ENCODE measurements at regions of chr3 and their contacts with region 1.

Region 1: GRCh38 chr3:49454458-49454857 is 15.6 kb upstream of the DAG1 start:
- DNase-seq: no peak
- H3K4me3 Mint-ChIP-seq: no peak overlapping the region
- H3K27ac Mint-ChIP-seq: no peak overlapping the region
- H3K4me1 Mint-ChIP-seq: no peaks in the 10 kb centered on the region
- H3K27me3 Mint-ChIP-seq: no peaks in the 10 kb centered on the region

Region 2: DNA sequence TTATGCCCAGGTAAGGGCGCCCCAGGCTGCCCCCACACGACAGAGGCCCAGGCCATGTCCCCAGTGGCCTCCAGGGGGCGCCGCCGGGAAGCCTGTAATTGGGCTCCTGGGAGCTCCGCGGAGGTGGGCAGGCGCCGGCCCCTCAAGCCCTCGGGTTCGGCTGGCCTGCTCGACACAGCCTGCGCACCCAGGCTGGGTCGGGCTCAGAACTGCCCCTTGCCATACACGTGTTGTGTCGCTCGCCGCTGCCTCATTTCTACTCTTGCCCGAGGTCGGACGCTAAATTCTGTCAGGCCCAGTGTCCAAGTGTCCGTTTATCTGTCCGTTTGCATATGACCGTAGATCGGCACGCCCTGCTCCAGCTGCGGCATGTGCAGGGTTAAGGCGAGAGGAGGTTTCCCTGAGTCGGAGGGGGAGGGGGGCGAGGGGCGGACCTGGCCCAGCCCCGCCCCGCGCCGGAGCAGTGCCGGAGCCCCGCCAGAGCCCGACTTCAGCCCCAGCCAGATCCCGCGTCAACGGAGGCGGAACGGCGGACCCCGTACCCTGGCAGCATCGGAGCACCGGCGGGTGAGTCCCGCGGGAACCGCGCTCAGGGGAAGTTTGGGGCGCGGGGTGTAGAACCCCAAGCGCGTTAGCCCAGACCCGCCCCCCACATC is 283.2 kb before region 1 on chr3 and contains the start of gene KLHDC8B:
- intact Hi-C with region 1: loop called (anchors 1 kb)
- DNase-seq: peak; percentile 73
- H3K4me3 Mint-ChIP-seq: peak within 1 kb of the TSS; percentile 84
- H3K27ac Mint-ChIP-seq: peak within 1 kb of the TSS; percentile 48
- H3K4me1 Mint-ChIP-seq: peaks cover 8% of the 10 kb centered on the region
- H3K27me3 Mint-ChIP-seq: no peaks in the 10 kb centered on the region
- total RNA-seq, gene KLHDC8B: 2.5 and 2.6 TPM in 2 replicates

Region 3: GRCh38 chr3:49295489-49296058 is 158.9 kb before region 1 on chr3:
- intact Hi-C with region 1: loop called (anchors 1 kb)
- DNase-seq: no peak
- H3K4me3 Mint-ChIP-seq: no peak overlapping the region
- H3K27ac Mint-ChIP-seq: no peak overlapping the region
- H3K4me1 Mint-ChIP-seq: no peaks in the 10 kb centered on the region
- H3K27me3 Mint-ChIP-seq: no peaks in the 10 kb centered on the region

Region 4: DNA sequence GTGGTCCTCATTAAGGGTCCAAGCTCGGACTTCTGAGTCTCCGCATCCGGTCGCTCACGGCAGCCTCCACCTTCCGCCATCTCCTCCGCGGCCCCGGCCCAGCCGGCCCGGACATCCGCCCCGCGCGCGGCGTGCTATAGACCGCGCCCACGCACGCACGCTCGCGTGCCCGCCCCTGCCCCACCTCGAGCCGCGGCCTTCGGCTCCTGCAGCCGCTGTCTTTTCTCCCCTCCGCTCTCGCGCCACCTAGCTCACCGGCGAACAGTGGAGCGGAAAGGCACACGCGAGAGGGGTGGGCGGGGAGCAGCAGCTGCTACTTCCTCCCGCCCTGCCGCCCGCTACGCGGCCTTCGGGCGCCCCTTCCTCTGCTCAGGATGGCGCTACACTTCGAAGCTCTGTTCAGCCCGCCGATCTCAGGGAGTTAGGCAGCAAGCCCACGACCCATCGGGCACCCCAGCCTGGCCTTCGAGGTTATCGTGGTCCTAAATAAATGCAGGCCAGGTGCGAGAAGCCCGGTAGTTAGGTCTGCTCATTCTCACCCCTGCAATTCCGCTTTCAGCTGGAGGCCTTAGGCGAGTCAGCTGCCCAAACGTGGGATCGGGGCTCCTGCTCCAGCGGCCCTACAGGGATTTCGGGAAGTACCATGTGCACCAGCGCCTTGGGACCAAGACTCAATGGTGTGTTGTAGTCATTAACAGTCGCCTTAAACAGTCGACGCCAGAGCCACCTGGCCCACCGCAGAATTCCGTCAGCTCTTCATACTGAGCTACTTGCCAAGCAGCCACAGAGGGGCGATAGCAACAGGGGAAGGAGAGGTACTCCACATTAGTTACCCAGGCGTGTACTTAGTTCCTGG is 114.3 kb before region 1 on chr3 and contains the start of gene USP4:
- intact Hi-C with region 1: loop called (anchors 1 kb)
- DNase-seq: peak; percentile 91
- H3K4me3 Mint-ChIP-seq: peak within 1 kb of the TSS; percentile 95
- H3K27ac Mint-ChIP-seq: peak within 1 kb of the TSS; percentile 96
- H3K4me1 Mint-ChIP-seq: peaks cover 36% of the 10 kb centered on the region
- H3K27me3 Mint-ChIP-seq: no peaks in the 10 kb centered on the region
- total RNA-seq, gene USP4: 78.6 and 82.7 TPM in 2 replicates

Region 5: DNA sequence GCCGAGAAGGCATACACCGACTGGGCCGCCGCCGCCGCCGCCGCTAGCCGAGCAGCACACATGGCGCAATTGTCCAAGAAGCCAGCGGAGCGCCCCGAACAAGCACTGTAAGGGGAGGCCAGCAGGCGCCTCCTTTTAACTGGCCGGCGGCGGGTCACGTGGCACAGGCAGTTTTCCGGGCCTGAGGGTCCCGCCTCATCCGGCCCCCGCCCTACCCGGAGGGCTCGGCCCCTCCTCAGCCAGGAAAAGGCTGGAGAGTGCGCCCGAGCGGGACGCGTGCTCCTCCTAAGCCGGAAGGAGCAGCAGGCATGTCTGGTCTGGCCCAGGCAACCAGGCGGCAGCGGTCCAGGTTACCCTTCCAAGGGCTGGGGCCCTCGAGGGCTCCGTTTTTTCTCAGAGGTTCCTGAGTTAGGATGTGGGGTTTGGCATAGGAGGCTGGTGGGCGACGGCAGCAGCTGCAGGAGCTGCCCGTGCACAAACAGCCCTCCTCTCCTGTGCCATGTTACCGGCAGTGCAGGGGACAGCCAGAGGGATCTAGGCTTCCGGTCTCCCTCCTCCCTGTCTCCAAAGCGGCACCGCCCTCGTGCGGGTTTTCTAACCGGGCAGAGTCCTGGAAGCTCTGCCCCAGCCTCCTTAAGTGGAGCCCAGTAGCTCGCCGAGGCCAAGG is 96.1 kb before region 1 on chr3 and contains the start of gene GPX1:
- intact Hi-C with region 1: loop called (anchors 2 kb)
- DNase-seq: peak; percentile 82
- H3K4me3 Mint-ChIP-seq: peak within 1 kb of the TSS; percentile 97
- H3K27ac Mint-ChIP-seq: peak within 1 kb of the TSS; percentile 88
- H3K4me1 Mint-ChIP-seq: peaks cover 17% of the 10 kb centered on the region
- H3K27me3 Mint-ChIP-seq: no peaks in the 10 kb centered on the region
- total RNA-seq, gene GPX1: 168 and 173 TPM in 2 replicates